ENCODE measurements at regions of chr7 and their contacts with region 1.

Region 1: DNA sequence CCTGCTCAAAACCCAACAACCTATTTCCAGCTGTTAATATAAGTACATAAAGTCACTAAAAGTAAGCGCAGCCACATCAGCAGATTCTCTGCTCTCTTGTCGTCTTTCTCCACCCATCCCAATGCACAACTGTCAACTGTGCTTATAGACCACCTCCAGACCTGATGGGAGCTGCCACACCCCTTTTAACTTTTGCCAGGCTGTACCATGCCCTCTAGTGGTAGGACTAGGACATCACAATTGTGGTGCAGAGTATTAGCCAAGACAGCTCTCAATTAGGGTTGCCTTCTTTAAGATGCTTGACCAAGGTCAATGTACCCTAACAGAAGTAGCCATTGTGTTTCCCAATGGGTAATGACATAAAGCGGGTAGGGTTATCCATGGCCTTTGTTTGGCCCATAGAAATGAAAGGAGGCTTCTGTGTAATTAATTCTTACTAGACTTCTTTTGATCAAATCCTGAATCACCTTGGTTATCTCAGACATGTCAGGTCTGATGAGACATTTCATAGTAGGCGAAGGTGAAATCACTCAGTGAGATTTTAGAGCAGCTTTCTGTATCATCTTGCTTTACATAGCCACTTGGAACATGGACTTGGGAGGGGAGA is 68.1 kb downstream of the SCRN1 start:
- DNase-seq: no peak
- H3K4me3 ChIP-seq: no peak overlapping the region
- H3K27ac ChIP-seq: no peak overlapping the region
- H3K4me1 ChIP-seq: peaks cover 0 to 1% (median under 1%) of the 10 kb centered on the region in 4 donors
- H3K27me3 ChIP-seq: no peaks in the 10 kb centered on the region
- CTCF ChIP-seq: peak; percentile 83 to 86

Region 2: DNA sequence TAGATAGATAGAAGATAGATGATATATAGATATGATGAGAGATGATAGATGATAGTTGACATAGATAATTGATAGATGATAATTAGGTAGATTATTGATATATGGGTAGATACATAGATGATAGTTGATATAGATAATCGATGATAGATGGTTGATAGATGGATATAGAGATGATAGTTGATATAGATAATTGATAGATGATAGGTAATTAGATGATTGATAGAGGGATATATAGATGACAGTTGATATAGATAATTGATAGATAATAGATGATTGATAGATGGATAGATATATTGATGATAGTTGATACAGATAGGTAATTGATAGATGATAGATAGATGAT is 285.5 kb before region 1 on chr7:
- intact Hi-C with region 1: loop called (anchors 5 kb)
- DNase-seq: no peak
- H3K4me3 ChIP-seq: no peak overlapping the region
- H3K27ac ChIP-seq: no peak overlapping the region
- H3K4me1 ChIP-seq: peaks cover 0 to 8% (median 1%) of the 10 kb centered on the region in 4 donors
- H3K27me3 ChIP-seq: no peaks in the 10 kb centered on the region
- CTCF ChIP-seq: no peak

Region 3: GRCh38 chr7:29748286-29749108 is 173.0 kb before region 1 on chr7:
- intact Hi-C with region 1: loop called (anchors 5 kb)
- DNase-seq: no peak
- H3K4me3 ChIP-seq: no peak overlapping the region
- H3K27ac ChIP-seq: no peak overlapping the region
- H3K4me1 ChIP-seq: peaks cover 0 to 7% (median 2%) of the 10 kb centered on the region in 4 donors
- H3K27me3 ChIP-seq: no peaks in the 10 kb centered on the region
- CTCF ChIP-seq: peak; percentile 52 to 62

Region 4: DNA sequence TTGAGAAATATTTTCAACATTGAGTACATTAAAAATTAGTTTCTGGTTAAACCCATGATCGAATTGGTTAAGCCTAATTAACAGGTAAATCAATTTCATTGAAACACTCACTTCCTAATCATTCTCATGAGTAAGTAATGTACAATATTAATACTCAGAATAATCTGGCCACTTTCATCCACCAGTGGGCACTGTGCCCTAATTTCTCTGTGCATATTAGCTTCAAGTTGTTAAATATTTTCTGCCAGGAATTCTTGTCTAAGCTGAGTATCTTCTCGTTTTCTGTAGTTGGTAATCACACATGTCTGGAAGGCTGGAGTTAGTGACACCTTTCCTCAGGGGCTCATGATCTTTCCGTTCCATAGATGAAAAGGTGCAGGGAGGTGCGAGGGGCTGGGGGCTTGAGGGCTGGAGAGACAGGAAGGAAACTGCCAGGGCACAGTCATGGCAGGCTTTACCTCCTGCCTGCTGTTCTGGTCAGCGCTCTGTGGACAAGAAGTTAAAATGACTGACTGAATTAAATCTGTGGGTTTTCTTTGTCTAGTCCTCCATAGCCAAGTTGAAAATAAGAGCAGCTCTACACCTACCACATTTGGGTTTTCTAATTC is 43.3 kb before region 1 on chr7:
- intact Hi-C with region 1: loop called (anchors 5 kb)
- DNase-seq: peak in 1 of 2 donors; percentile 54
- H3K4me3 ChIP-seq: no peak overlapping the region
- H3K27ac ChIP-seq: no peak overlapping the region
- H3K4me1 ChIP-seq: peaks cover 0 to 8% (median 6%) of the 10 kb centered on the region in 4 donors
- H3K27me3 ChIP-seq: no peaks in the 10 kb centered on the region
- CTCF ChIP-seq: peak; percentile 40 to 46

Region 5: GRCh38 chr7:30026229-30027064 is 104.9 kb after region 1 on chr7 and contains the start of gene FKBP14:
- intact Hi-C with region 1: no loop called
- DNase-seq: peak; percentile 97 to 98
- H3K4me3 ChIP-seq: peak within 1 kb of the TSS; percentile 93 to 94
- H3K27ac ChIP-seq: peak within 1 kb of the TSS; percentile 91 to 92
- H3K4me1 ChIP-seq: peaks cover 0 to 54% (median 34%) of the 10 kb centered on the region in 4 donors
- H3K27me3 ChIP-seq: no peaks in the 10 kb centered on the region
- CTCF ChIP-seq: no peak